GM13976 (cell line): ENCODE measurements at regions of chr11 and their contacts with region 1.

Region 1: DNA sequence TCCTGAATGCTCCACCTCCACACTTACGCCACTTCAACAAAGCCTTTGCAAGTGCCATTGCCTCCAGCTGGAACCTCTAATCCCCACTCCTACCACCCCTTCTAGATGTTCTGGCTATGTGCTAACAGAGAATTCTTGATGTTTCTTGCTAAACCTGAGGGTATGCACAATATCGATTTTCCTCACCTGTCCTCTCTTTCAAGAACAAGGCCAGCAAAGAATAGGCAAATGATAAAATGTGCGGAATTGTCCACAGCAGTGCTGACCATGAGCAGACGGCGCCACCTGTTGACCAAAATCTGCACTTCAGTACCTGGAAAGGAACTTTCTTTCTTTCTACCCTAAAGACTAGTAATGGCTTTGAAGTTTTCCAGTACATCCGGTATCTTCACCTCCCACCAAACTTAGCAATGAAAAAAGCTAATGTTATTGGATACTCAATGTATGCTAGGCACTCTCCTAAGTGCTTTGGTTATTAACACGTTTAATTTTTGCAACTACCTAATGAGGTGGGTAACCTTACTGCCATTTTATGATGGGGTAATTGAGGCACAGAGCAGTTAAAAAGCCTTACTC is 3.4 kb downstream of the TIMM10 start:
- DNase-seq: no peak
- CTCF ChIP-seq: peak; percentile 81

Region 2: DNA sequence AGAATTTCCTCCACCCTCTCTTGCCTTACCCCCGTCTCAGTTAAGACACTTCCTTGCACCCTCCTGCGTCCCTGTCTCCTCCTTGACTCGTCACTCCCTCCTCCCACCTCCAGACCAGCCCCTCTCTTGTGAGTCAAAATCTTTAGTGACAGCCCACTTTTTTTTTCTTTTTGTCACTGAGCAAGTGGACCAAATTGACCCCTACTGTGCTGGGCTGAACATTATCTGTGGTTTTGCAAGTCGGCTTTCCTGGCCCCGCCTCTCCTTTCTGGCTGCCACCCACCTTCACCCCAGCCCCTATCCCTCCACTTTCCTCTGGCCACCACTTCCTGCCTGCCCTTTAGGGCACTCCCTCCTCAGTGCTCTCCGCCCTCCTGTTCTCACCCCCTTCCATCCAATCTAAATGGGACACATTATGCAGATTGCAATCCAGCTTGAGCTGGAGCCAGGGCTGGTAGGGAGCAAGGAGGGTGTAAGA is 289.9 kb before region 1 on chr11 and contains the start of gene APLNR:
- in situ Hi-C with region 1: no loop called
- DNase-seq: no peak
- CTCF ChIP-seq: no peak

Region 3: GRCh38 chr11:57345555-57346211 is 181.5 kb before region 1 on chr11:
- in situ Hi-C with region 1: loop called (anchors 10 kb)
- DNase-seq: peak; percentile 81
- CTCF ChIP-seq: peak; percentile 73